ENCODE measurements at regions of chr6 and their contacts with region 1.

Region 1: GRCh38 chr6:53718597-53719460 is 53.3 kb upstream of the KLHL31 start:
- DNase-seq: peak; percentile 74
- H3K4me3 ChIP-seq: no peak overlapping the region
- H3K27ac ChIP-seq: no peak overlapping the region
- H3K4me1 ChIP-seq: no peaks in the 10 kb centered on the region
- H3K27me3 ChIP-seq: peaks cover 2 to 15% of the 10 kb centered on the region in 2 experiments
- CTCF ChIP-seq: peak; percentile 69 to 78
- POLR2A ChIP-seq: no peak

Region 2: GRCh38 chr6:53492860-53493634 is 225.8 kb before region 1 on chr6:
- CTCF ChIA-PET with region 1: interaction called, 71 read pairs
- POLR2A ChIA-PET with region 1: no interaction called
- dilution Hi-C with region 1: no loop called
- intact Hi-C with region 1: no loop called
- DNase-seq: peak; percentile 74
- H3K4me3 ChIP-seq: peak overlapping the region in 1 of 3 experiments; percentile 31
- H3K27ac ChIP-seq: no peak overlapping the region
- H3K4me1 ChIP-seq: no peaks in the 10 kb centered on the region
- H3K27me3 ChIP-seq: no peaks in the 10 kb centered on the region
- CTCF ChIP-seq: peak; percentile 51 to 54
- POLR2A ChIP-seq: no peak

Region 3: DNA sequence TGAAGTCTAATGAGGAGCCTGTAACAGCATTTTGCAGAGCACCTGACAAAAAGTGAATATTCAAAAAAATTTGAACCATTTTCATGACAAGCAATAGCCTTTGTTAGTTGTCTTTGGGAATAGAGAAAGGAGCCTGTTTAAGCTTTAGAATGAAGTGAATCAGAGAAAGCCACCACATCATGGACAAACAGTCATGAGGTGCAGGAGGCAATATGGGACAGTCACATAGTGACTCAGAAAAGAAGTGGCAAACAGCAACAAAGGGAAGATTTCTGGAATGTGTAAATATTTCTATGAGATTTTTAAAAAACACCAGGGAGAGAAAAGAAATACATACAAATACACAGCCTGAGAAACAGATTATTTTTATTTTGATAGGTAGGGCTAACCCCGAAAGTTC is 59.8 kb before region 1 on chr6:
- CTCF ChIA-PET with region 1: interaction called, 11 read pairs
- POLR2A ChIA-PET with region 1: no interaction called
- dilution Hi-C with region 1: no loop called
- intact Hi-C with region 1: no loop called
- DNase-seq: no peak
- H3K4me3 ChIP-seq: no peak overlapping the region
- H3K27ac ChIP-seq: no peak overlapping the region
- H3K4me1 ChIP-seq: no peaks in the 10 kb centered on the region
- H3K27me3 ChIP-seq: peaks cover 4 to 15% of the 10 kb centered on the region in 2 experiments
- CTCF ChIP-seq: no peak
- POLR2A ChIP-seq: no peak

Region 4: GRCh38 chr6:53701333-53702218 is 17.3 kb before region 1 on chr6:
- CTCF ChIA-PET with region 1: interaction called, 29 read pairs
- POLR2A ChIA-PET with region 1: interaction called, 3 read pairs
- dilution Hi-C with region 1: no loop called
- intact Hi-C with region 1: no loop called
- DNase-seq: no peak
- H3K4me3 ChIP-seq: no peak overlapping the region
- H3K27ac ChIP-seq: no peak overlapping the region
- H3K4me1 ChIP-seq: no peaks in the 10 kb centered on the region
- H3K27me3 ChIP-seq: peaks cover 0 to 2% of the 10 kb centered on the region in 2 experiments
- CTCF ChIP-seq: no peak
- POLR2A ChIP-seq: no peak

Region 5: GRCh38 chr6:53734473-53735299 is 15.9 kb after region 1 on chr6:
- CTCF ChIA-PET with region 1: interaction called, 112 read pairs
- POLR2A ChIA-PET with region 1: no interaction called
- dilution Hi-C with region 1: no loop called
- intact Hi-C with region 1: no loop called
- DNase-seq: peak; percentile 75
- H3K4me3 ChIP-seq: peak overlapping the region in 1 of 3 experiments; percentile 18
- H3K27ac ChIP-seq: peak overlapping the region; percentile 98
- H3K4me1 ChIP-seq: peaks cover 40% of the 10 kb centered on the region
- H3K27me3 ChIP-seq: no peaks in the 10 kb centered on the region
- CTCF ChIP-seq: peak; percentile 25 to 43
- POLR2A ChIP-seq: no peak

Region 6: GRCh38 chr6:53794720-53795253 is 76.0 kb after region 1 on chr6 and contains the start of gene LRRC1:
- CTCF ChIA-PET with region 1: interaction called, 24 read pairs
- POLR2A ChIA-PET with region 1: no interaction called
- dilution Hi-C with region 1: no loop called
- intact Hi-C with region 1: no loop called
- DNase-seq: peak; percentile 95
- H3K4me3 ChIP-seq: peak within 1 kb of the TSS; percentile 58 to 76 (median 72)
- H3K27ac ChIP-seq: peak within 1 kb of the TSS; percentile 43
- H3K4me1 ChIP-seq: peaks cover 25% of the 10 kb centered on the region
- H3K27me3 ChIP-seq: no peaks in the 10 kb centered on the region
- CTCF ChIP-seq: no peak
- POLR2A ChIP-seq: peak; percentile 83
- total RNA-seq, gene LRRC1: 10.6 and 11.7 TPM in 2 replicates

Region 7: GRCh38 chr6:55239099-55239498 is 1520.3 kb after region 1 on chr6:
- CTCF ChIA-PET with region 1: interaction called, 3 read pairs
- POLR2A ChIA-PET with region 1: no interaction called
- dilution Hi-C with region 1: no loop called
- intact Hi-C with region 1: loop called (anchors 10 kb)
- DNase-seq: peak; percentile 28
- H3K4me3 ChIP-seq: no peak overlapping the region
- H3K27ac ChIP-seq: no peak overlapping the region
- H3K4me1 ChIP-seq: no peaks in the 10 kb centered on the region
- H3K27me3 ChIP-seq: peaks cover 0 to 5% of the 10 kb centered on the region in 2 experiments
- CTCF ChIP-seq: no peak
- POLR2A ChIP-seq: no peak